H1 (cell line): ENCODE measurements at regions of chr17 and their contacts with region 1.

Region 1: DNA sequence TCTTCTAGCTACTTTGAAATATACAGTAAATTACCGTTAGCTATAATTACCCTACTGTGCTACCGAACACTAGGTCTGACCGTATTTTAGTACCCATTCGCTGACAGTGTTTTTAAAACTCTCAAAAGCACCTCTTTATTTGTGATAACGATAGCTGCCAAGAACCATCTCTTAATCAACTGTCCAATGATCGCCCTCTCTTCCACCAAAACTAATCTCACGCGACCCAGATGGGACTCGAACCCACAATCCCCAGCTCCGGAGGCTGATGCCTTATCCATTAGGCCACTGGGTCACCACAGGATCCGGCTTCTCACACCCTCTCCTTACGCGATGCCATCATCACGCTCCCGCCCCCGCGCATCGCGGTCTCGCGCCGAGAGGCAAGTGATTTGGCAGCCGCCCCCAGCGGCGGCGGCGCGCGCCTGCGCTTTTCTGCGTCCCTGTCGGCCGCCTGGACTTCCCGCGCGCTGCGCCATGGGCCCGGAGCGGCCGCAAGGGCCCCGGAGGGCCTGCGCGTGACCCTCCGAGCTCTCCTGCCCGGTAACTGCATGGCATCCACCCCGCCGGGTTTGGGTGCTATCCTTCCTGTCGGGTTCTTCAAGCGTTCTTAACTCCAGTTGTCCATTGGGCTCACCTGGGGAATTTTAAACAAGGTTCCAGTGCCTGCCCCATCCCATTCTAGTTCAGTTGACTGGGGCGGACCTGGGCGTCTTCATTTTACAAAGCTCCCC is 15.7 kb upstream of the KPNA2 start:
- DNase-seq: peak; percentile 94 to 100
- H3K4me3 ChIP-seq: peak overlapping the region; percentile 63 to 72 (median 70)
- H3K27ac ChIP-seq: peak overlapping the region; percentile 52
- H3K4me1 ChIP-seq: peaks cover 0 to 3% (median 1%) of the 10 kb centered on the region in 4 experiments; a peak in 4 of 7 replicates
- H3K27me3 ChIP-seq: no peaks in the 10 kb centered on the region
- CTCF ChIP-seq: peak; percentile 27 to 52 (median 43)
- EP300 ChIP-seq: no peak
- POLR2A ChIP-seq: peak; percentile 73 to 80; a peak in 2 of 3 replicates
- RAD21 ChIP-seq: peak in 1 of 2 experiments; percentile 28; a peak in 1 of 4 replicates

Region 2: GRCh38 chr17:67974598-67975066 is 45.2 kb before region 1 on chr17:
- CTCF ChIA-PET with region 1: interaction called, 4 read pairs
- POLR2A ChIA-PET with region 1: interaction called, 11 read pairs
- DNase-seq: peak; percentile 72 to 87
- H3K4me3 ChIP-seq: peak overlapping the region; percentile 70 to 87 (median 78)
- H3K27ac ChIP-seq: peak overlapping the region; percentile 95
- H3K4me1 ChIP-seq: peaks cover 0 to 7% (median 2%) of the 10 kb centered on the region in 4 experiments; a peak in 4 of 7 replicates
- H3K27me3 ChIP-seq: no peaks in the 10 kb centered on the region
- CTCF ChIP-seq: peak in 1 of 3 experiments; percentile 6; a peak in 1 of 4 replicates
- EP300 ChIP-seq: peak in 1 of 2 experiments; percentile 27; a peak in 1 of 3 replicates
- POLR2A ChIP-seq: peak; percentile 45 to 89
- RAD21 ChIP-seq: no peak

Region 3: DNA sequence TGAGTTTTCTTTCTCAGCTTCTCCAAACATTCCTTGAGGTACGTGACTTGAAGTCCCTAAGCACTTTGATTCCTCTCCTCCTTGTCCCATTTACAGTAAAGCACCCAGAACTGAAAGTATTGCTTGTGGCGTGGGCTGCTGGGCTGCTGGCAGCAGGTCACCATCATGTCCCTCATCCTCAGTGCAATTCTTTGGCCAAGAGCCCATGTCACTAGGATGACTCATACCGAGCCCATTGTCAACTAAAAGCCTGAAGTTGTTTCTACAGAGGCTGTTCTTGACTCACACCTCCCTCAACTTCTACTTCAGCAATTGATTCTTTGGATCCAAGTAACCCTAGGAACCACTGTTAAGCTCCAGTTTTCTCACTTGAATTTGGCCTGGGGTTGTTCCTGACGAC is 70.0 kb after region 1 on chr17:
- CTCF ChIA-PET with region 1: no interaction called
- POLR2A ChIA-PET with region 1: no interaction called
- DNase-seq: no peak
- H3K4me3 ChIP-seq: no peak overlapping the region
- H3K27ac ChIP-seq: no peak overlapping the region
- H3K4me1 ChIP-seq: peaks cover 0 to 4% (median 1%) of the 10 kb centered on the region in 4 experiments; a peak in 1 of 7 replicates
- H3K27me3 ChIP-seq: no peaks in the 10 kb centered on the region
- CTCF ChIP-seq: no peak
- EP300 ChIP-seq: no peak
- POLR2A ChIP-seq: no peak
- RAD21 ChIP-seq: no peak